CD4-positive, alpha-beta T cell (primary cell): ENCODE measurements at regions of chr14 and their contacts with region 1.

Region 1: GRCh38 chr14:67599698-67600561 is at the start of gene PIGH:
- DNase-seq: peak; percentile 87 to 97 (median 94)
- ATAC-seq: peak; percentile 95
- H3K4me3 ChIP-seq: peak within 1 kb of the TSS; percentile 98
- H3K4me3 Mint-ChIP-seq: peak within 1 kb of the TSS; percentile 92
- H3K27ac ChIP-seq: peak within 1 kb of the TSS; percentile 56 to 83
- H3K27ac Mint-ChIP-seq: peak within 1 kb of the TSS; percentile 82
- H3K4me1 ChIP-seq: peaks cover 24% of the 10 kb centered on the region
- H3K4me1 Mint-ChIP-seq: peaks cover 49% of the 10 kb centered on the region
- H3K27me3 ChIP-seq: no peaks in the 10 kb centered on the region
- H3K27me3 Mint-ChIP-seq: no peaks in the 10 kb centered on the region
- CTCF ChIP-seq: peak; percentile 75
- total RNA-seq, gene PIGH: 66.0 to 69.7 TPM

Region 2: GRCh38 chr14:67619446-67620216 is 19.7 kb after region 1 on chr14 and contains the start of gene ARG2:
- CTCF ChIA-PET with region 1: interaction called, 13 read pairs
- POLR2A ChIA-PET with region 1: interaction called, 29 read pairs
- intact Hi-C with region 1: loop called in 1 of 2 experiments (anchors 1 kb)
- DNase-seq: peak; percentile 92 to 99 (median 97)
- ATAC-seq: peak; percentile 90
- H3K4me3 ChIP-seq: peak within 1 kb of the TSS; percentile 88
- H3K4me3 Mint-ChIP-seq: peak within 1 kb of the TSS; percentile 94
- H3K27ac ChIP-seq: peak within 1 kb of the TSS; percentile 83 to 86
- H3K27ac Mint-ChIP-seq: peak within 1 kb of the TSS; percentile 83
- H3K4me1 ChIP-seq: peaks cover 21% of the 10 kb centered on the region
- H3K4me1 Mint-ChIP-seq: peaks cover 44% of the 10 kb centered on the region
- H3K27me3 ChIP-seq: peaks cover 0 to 4% of the 10 kb centered on the region in 2 experiments
- H3K27me3 Mint-ChIP-seq: no peaks in the 10 kb centered on the region
- CTCF ChIP-seq: no peak
- total RNA-seq, gene ARG2: 3.7 to 3.9 TPM

Region 3: GRCh38 chr14:67674481-67675169 is 74.7 kb after region 1 on chr14 and contains the start of gene VTI1B:
- CTCF ChIA-PET with region 1: interaction called, 11 read pairs
- POLR2A ChIA-PET with region 1: interaction called, 8 read pairs
- intact Hi-C with region 1: loop called (anchors 5 kb)
- DNase-seq: peak; percentile 57 to 89 (median 72)
- ATAC-seq: peak; percentile 91
- H3K4me3 ChIP-seq: peak within 1 kb of the TSS; percentile 83
- H3K4me3 Mint-ChIP-seq: peak within 1 kb of the TSS; percentile 91
- H3K27ac ChIP-seq: peak within 1 kb of the TSS; percentile 92 to 95
- H3K27ac Mint-ChIP-seq: peak within 1 kb of the TSS; percentile 89
- H3K4me1 ChIP-seq: peaks cover 33% of the 10 kb centered on the region
- H3K4me1 Mint-ChIP-seq: peaks cover 43% of the 10 kb centered on the region
- H3K27me3 ChIP-seq: no peaks in the 10 kb centered on the region
- H3K27me3 Mint-ChIP-seq: no peaks in the 10 kb centered on the region
- CTCF ChIP-seq: no peak
- total RNA-seq, gene VTI1B: 24.4 to 27.0 TPM

Region 4: GRCh38 chr14:67816326-67817002 is 216.5 kb after region 1 on chr14 and contains the start of gene ZFYVE26:
- CTCF ChIA-PET with region 1: no interaction called
- POLR2A ChIA-PET with region 1: interaction called, 6 read pairs
- intact Hi-C with region 1: loop called in 1 of 2 experiments (anchors 5 kb)
- DNase-seq: peak; percentile 77 to 95 (median 82)
- ATAC-seq: peak; percentile 94
- H3K4me3 ChIP-seq: peak within 1 kb of the TSS; percentile 78
- H3K4me3 Mint-ChIP-seq: peak within 1 kb of the TSS; percentile 94
- H3K27ac ChIP-seq: peak within 1 kb of the TSS; percentile 67 to 74
- H3K27ac Mint-ChIP-seq: peak within 1 kb of the TSS; percentile 85
- H3K4me1 ChIP-seq: peaks cover 38% of the 10 kb centered on the region
- H3K4me1 Mint-ChIP-seq: peaks cover 68% of the 10 kb centered on the region
- H3K27me3 ChIP-seq: no peaks in the 10 kb centered on the region
- H3K27me3 Mint-ChIP-seq: no peaks in the 10 kb centered on the region
- CTCF ChIP-seq: no peak
- total RNA-seq, gene ZFYVE26: 20.5 to 23.2 TPM